Naive thymus-derived CD4-positive, alpha-beta T cell (primary cell): ENCODE measurements at regions of chr7 and their contacts with region 1.

Region 1: DNA sequence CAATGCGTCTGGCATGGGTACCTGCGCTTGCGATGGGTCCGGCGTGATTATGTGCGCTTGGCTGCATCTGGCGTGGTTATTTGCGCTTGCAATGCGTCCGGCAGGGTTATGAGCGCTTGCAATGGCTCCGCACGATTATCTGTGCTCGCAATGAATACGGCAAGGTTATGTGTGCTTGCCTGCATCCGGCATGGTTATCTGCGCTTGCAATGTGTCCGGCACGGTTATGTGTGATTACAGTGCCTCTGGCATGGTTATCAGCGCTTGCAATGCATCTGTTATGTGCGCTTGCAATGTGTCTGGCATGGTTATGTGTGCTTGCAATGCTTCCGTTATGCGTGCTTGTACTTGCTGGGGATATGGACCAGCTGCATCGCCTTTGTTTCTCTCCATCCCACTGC is 37.7 kb downstream of the RBAK start:
- DNase-seq: no peak
- ATAC-seq: no peak
- H3K4me3 ChIP-seq: no peak overlapping the region
- H3K4me3 Mint-ChIP-seq: peak overlapping the region in 1 of 10 donors; percentile 11
- H3K27ac ChIP-seq: no peak overlapping the region
- H3K27ac Mint-ChIP-seq: peak overlapping the region in 1 of 9 donors; percentile 38
- H3K4me1 ChIP-seq: no peaks in the 10 kb centered on the region
- H3K4me1 Mint-ChIP-seq: peaks cover 0 to 14% (median 4%) of the 10 kb centered on the region in 7 donors
- H3K27me3 ChIP-seq: no peaks in the 10 kb centered on the region
- H3K27me3 Mint-ChIP-seq: peaks cover 0 to 26% (median 0%) of the 10 kb centered on the region in 5 donors

Region 2: GRCh38 chr7:4610768-4611467 is 472.4 kb before region 1 on chr7:
- CTCF ChIA-PET with region 1: no interaction called
- POLR2A ChIA-PET with region 1: no interaction called
- intact Hi-C with region 1: loop called in 1 of 2 experiments (anchors 1 kb)
- DNase-seq: peak; percentile 23 to 77 (median 71)
- ATAC-seq: peak; percentile 91
- H3K4me3 ChIP-seq: no peak overlapping the region
- H3K4me3 Mint-ChIP-seq: no peak overlapping the region
- H3K27ac ChIP-seq: no peak overlapping the region
- H3K27ac Mint-ChIP-seq: peak overlapping the region in 3 of 9 donors; percentile 5 to 67 (median 26)
- H3K4me1 ChIP-seq: peaks cover 0 to 12% of the 10 kb centered on the region in 2 donors
- H3K4me1 Mint-ChIP-seq: peaks cover 11 to 28% (median 20%) of the 10 kb centered on the region in 7 donors
- H3K27me3 ChIP-seq: no peaks in the 10 kb centered on the region
- H3K27me3 Mint-ChIP-seq: peaks cover 0 to 3% (median 0%) of the 10 kb centered on the region in 5 donors

Region 3: DNA sequence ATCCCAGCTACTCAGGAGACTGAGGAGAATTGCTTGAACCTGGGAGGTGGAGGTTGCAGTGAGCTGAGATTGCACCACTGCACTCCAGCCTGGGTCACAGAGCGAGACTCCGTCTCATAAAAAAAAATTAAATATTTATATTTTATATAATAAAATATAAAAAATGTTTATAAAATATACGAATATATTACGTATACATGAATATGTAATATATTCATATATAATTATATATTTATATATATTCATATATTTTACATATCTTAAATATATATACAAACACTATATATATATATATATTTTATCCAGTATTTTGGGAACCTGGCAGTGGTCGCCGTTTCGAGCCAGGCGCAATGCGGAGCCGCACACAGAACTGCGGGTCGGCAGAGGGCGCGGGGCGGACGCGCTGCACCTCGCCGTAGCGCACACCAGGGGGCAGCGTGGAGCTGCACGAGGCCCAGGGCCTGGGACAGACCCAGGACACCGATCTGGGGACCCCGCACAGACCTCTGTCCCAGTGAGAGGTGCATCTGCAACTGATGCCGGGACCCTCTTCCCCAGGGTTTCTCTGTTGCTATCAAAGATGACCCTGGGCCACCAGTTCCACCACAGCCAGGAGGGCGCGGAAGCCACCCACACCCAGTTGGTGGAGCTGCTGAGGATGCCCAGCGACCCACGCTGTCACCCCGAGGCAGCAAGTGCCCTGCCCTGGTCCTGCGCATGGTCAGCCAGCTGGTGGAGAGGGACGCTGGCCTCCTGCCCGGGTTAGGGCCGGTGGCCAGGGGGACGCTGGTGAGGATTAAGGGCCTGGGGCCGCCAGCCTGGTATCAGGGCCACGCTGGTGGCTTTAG is 285.2 kb before region 1 on chr7:
- CTCF ChIA-PET with region 1: interaction called, 12 read pairs
- POLR2A ChIA-PET with region 1: no interaction called
- intact Hi-C with region 1: loop called (anchors 1 to 2 kb)
- DNase-seq: peak; percentile 34 to 77 (median 60)
- ATAC-seq: peak; percentile 91
- H3K4me3 ChIP-seq: no peak overlapping the region
- H3K4me3 Mint-ChIP-seq: no peak overlapping the region
- H3K27ac ChIP-seq: no peak overlapping the region
- H3K27ac Mint-ChIP-seq: no peak overlapping the region
- H3K4me1 ChIP-seq: no peaks in the 10 kb centered on the region
- H3K4me1 Mint-ChIP-seq: peaks cover 0 to 10% (median 6%) of the 10 kb centered on the region in 7 donors
- H3K27me3 ChIP-seq: no peaks in the 10 kb centered on the region
- H3K27me3 Mint-ChIP-seq: no peaks in the 10 kb centered on the region

Region 4: DNA sequence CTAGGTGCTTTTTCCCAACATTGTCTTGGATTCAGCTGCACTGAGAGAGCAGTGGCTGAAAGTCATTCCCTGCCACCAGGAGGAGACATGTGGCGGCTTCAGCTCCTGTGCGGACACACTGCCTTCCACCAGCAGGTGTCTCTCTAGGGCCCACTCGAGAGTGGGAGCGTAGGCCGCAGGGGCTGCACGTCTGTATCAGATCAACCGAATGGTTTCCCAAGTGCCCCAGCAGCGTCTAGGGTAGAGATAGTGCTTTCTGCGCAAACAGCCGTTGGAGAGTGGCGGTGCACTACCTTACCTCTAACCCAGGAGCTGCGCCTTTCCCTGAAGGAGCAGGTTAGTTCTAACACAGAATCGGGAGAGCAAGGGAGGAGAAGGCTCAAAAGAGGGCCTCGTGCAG is 253.1 kb before region 1 on chr7:
- CTCF ChIA-PET with region 1: interaction called, 25 read pairs
- POLR2A ChIA-PET with region 1: no interaction called
- intact Hi-C with region 1: loop called in 1 of 2 experiments (anchors 1 kb)
- DNase-seq: peak; percentile 23 to 69 (median 49)
- ATAC-seq: peak; percentile 79
- H3K4me3 ChIP-seq: no peak overlapping the region
- H3K4me3 Mint-ChIP-seq: no peak overlapping the region
- H3K27ac ChIP-seq: no peak overlapping the region
- H3K27ac Mint-ChIP-seq: peak overlapping the region in 2 of 9 donors; percentile 64 to 87
- H3K4me1 ChIP-seq: no peaks in the 10 kb centered on the region
- H3K4me1 Mint-ChIP-seq: peaks cover 0 to 6% (median 5%) of the 10 kb centered on the region in 7 donors
- H3K27me3 ChIP-seq: no peaks in the 10 kb centered on the region
- H3K27me3 Mint-ChIP-seq: peaks cover 0 to 7% (median 0%) of the 10 kb centered on the region in 5 donors

Region 5: DNA sequence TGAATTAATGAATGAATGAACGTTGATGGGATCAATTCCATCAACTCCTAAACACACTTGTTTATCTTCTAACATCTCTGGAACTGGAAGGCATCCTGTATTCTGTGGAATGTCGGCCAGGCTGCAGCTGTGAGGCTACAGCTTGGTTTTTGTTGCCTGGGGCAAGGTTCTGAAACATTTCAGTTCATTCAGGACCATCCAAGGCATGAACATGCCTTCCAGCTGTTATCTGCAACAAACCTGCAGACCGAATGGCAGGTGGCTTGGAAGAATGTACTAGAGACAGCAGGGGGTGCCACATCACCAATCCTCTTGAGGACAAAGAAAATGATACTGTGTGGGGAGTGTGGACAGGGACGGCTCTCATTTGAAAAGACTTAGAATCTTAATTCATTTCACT is 233.9 kb before region 1 on chr7:
- CTCF ChIA-PET with region 1: interaction called, 3 read pairs
- POLR2A ChIA-PET with region 1: no interaction called
- intact Hi-C with region 1: loop called (anchors 1 to 5 kb)
- DNase-seq: peak in 4 of 9 donors; percentile 4 to 33 (median 20)
- ATAC-seq: no peak
- H3K4me3 ChIP-seq: no peak overlapping the region
- H3K4me3 Mint-ChIP-seq: no peak overlapping the region
- H3K27ac ChIP-seq: no peak overlapping the region
- H3K27ac Mint-ChIP-seq: no peak overlapping the region
- H3K4me1 ChIP-seq: no peaks in the 10 kb centered on the region
- H3K4me1 Mint-ChIP-seq: peaks cover 0 to 6% (median 1%) of the 10 kb centered on the region in 7 donors
- H3K27me3 ChIP-seq: no peaks in the 10 kb centered on the region
- H3K27me3 Mint-ChIP-seq: peaks cover 9 to 17% (median 16%) of the 10 kb centered on the region in 5 donors